Panc1 (cell line): ENCODE measurements at regions of chr19 and their contacts with region 1.

Region 1: GRCh38 chr19:48812094-48812929 is 1.5 kb upstream of the BCAT2 start:
- DNase-seq: no peak
- ATAC-seq: peak; percentile 86
- H3K4me3 ChIP-seq: peak overlapping the region; percentile 63 to 64
- H3K27ac ChIP-seq: no peak overlapping the region
- H3K4me1 ChIP-seq: no peaks in the 10 kb centered on the region; the same call in none of the 2 replicates
- H3K27me3 ChIP-seq: no peaks in the 10 kb centered on the region
- CTCF ChIP-seq: no peak

Region 2: DNA sequence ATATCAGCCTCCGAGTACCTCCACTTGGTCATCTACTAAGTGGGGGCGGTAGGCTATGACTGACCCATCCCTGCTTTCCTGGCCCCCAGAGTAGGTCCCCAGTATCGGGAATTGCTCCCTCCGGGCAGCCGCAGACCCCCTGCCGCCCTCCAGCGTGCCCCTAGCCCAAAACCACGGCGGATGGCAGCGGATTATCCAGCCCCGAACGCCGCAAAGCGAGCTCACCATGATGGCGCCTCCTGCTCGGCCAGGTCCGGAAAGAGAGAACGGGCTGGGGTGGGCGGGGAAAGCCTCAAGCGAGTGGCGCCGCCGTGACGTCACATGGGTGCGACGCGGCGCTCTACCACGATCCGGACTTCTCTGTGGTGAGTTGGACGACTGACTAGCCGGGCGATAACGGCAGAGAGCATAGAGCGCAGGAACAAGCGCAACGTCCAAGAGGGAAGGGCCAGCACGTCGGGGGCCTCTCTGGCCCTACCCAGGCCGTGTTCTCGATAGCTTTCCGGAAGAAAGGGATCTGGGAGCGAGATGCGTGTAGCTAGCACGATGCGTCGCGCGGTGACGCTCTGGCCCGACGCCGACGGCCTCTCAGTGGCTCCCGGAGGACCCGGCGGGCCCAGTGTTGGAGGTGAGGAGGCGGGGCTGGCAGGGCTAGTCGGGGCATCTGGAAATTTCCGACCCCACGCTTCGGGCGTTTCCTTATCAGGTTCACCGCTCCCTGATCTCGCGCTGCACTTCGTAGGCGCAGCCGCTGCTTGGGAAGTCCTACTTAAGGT is 193.2 kb before region 1 on chr19 and contains the starts of genes RPL18 and SPHK2:
- CTCF ChIA-PET with region 1: no interaction called
- POLR2A ChIA-PET with region 1: interaction called, 14 read pairs
- in situ Hi-C with region 1: no loop called
- intact Hi-C with region 1: no loop called
- DNase-seq: peak; percentile 88
- ATAC-seq: peak; percentile 91
- H3K4me3 ChIP-seq: peak within 1 kb of the TSS; percentile 96 to 99
- H3K27ac ChIP-seq: peak within 1 kb of the TSS; percentile 98
- H3K4me1 ChIP-seq: peaks cover 42% of the 10 kb centered on the region
- H3K27me3 ChIP-seq: no peaks in the 10 kb centered on the region
- CTCF ChIP-seq: no peak
- total RNA-seq, gene RPL18: 670 TPM
- total RNA-seq, gene SPHK2: 19.5 TPM

Region 3: DNA sequence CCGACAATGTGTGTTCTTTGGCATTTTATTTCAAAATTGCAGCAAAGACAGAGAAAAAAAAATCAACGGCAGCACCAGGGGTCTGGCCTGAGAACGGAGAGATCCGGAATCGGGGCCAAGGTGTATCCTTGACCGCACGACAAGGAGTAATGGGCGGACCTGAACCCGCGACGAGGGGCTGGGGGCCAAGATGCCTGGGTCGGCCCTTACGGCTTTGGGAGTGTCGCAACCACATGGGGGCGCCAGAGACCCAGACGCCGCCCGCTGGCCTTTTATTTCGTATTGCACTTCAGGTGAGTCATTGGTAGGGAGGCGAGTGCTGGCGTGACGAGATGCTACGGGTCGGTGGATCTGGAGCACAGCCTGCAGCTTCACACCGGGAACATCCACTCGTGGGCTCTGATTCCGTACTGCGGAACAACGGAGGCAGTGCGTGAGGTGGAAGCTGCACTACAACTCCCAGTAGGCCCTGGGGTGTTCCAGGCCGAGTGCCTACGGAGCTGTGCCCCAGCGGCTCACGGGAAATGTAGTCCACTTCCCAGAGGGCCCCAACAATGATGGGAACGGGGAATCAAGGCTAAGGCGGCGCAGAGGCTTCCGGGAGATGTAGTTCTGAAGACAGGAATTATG is 17.1 kb before region 1 on chr19:
- CTCF ChIA-PET with region 1: interaction called, 10 read pairs
- POLR2A ChIA-PET with region 1: interaction called, 3 read pairs
- in situ Hi-C with region 1: no loop called
- intact Hi-C with region 1: no loop called
- DNase-seq: peak; percentile 62
- ATAC-seq: peak; percentile 100
- H3K4me3 ChIP-seq: peak overlapping the region; percentile 47 to 63
- H3K27ac ChIP-seq: peak overlapping the region; percentile 34
- H3K4me1 ChIP-seq: no peaks in the 10 kb centered on the region
- H3K27me3 ChIP-seq: no peaks in the 10 kb centered on the region
- CTCF ChIP-seq: peak; percentile 94